ENCODE measurements at regions of chr13 and their contacts with region 1.

Region 1: DNA sequence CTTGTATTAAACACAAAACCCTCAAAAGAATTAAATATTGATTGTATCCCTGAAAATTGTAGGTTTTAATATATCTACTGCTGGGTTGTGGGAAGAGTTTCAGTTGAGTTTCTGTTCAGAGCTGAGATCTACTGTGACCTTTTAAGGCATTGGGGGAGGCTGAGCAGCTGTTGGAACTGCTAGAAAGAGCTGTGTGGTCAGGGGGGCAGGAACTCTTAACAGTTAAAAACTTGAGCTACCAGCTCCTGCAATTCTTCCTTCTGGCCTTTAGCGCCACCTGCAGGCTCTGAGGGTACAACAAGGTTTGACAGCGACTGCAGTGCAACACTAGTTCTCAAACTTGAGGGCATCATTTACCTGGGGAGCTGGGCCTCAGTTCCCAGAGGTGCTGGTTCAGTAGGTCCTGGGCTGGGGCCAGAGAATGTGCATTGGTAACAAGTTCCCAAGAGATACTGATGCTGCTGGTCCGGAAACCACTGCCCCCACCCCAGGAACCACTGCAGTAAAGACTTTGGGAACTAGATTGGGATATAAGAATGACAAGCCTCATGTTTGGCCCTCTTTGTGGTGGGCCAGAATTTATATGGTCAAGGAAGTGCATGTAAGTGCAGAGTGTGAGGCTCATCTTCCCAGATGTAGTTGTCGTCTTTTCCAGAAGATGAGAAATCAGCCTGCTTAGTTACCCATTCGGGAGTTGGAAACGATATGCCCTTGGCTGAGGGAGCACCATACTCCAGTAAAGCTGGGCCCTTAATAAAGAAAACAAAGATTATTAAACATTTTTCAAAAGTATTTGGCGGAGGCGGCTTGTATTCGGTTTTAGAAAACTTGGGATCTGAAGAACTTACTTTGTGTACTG is 2.6 kb downstream of the RNASEH2B start:
- DNase-seq: peak; percentile 86
- ATAC-seq: peak; percentile 9; the same call in 1 of the 2 replicates
- H3K4me3 ChIP-seq: peak overlapping the region; percentile 84; the same call in 1 of the 2 replicates
- H3K27ac ChIP-seq: no peak overlapping the region
- H3K4me1 ChIP-seq: peaks cover 24% of the 10 kb centered on the region
- H3K27me3 ChIP-seq: no peaks in the 10 kb centered on the region
- CTCF ChIP-seq: peak; percentile 82

Region 2: DNA sequence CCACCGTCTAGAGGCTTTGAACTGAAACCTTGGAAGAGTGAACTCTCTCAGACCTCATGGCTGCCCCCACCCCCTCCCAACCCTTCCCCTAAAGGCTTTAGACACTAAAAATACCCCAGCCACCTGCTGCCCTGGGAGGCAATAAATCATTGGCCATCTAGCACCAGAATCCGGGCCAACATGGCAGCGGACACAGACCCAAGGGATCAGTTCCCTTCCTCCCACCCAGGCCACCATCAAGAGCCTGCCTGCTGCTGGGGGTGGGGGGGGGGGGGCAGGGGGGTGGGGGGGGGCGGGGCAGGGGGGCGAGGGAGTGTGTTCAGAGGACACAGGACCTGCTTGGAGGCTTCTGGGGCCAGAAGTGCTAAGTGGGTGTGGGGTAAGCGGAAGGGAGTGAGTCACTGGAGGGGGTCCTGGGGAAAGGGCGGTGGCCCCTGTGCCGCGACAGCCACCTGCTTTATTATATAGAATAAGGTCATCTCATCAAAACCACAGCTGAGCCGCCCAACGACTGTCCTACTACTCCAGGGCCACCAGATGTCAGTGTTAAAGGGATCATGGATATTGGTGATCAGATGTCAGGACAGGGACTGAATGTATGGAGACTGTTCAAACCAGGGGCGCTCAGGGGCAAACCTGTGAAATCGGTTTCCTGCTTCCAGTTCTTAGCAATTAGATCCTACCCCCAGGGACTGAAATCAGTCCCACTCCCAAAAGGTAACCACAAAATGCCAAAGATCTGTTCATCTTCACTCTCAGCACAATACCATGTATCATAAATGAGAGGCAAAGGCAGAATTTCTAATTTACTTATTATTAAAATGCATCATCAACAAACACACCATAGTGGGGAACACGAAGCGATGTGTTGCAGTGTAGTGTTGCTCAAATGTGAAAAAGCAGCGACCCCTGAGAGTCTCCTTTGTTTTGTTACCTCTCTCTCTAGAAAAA is 1259.5 kb before region 1 on chr13:
- CTCF ChIA-PET with region 1: no interaction called
- POLR2A ChIA-PET with region 1: no interaction called
- intact Hi-C with region 1: loop called (anchors 5 kb)
- DNase-seq: peak; percentile 63
- ATAC-seq: peak; percentile 55
- H3K4me3 ChIP-seq: no peak overlapping the region
- H3K27ac ChIP-seq: no peak overlapping the region
- H3K4me1 ChIP-seq: peaks cover 25% of the 10 kb centered on the region
- H3K27me3 ChIP-seq: no peaks in the 10 kb centered on the region
- CTCF ChIP-seq: peak; percentile 65

Region 3: GRCh38 chr13:49976314-49977258 is 935.6 kb before region 1 on chr13:
- CTCF ChIA-PET with region 1: interaction called, 3 read pairs
- POLR2A ChIA-PET with region 1: no interaction called
- intact Hi-C with region 1: loop called (anchors 5 kb)
- DNase-seq: peak; percentile 72
- ATAC-seq: peak; percentile 91
- H3K4me3 ChIP-seq: peak overlapping the region; percentile 41; the same call in 1 of the 2 replicates
- H3K27ac ChIP-seq: peak overlapping the region; percentile 79
- H3K4me1 ChIP-seq: peaks cover 13% of the 10 kb centered on the region
- H3K27me3 ChIP-seq: no peaks in the 10 kb centered on the region
- CTCF ChIP-seq: peak; percentile 93

Region 4: DNA sequence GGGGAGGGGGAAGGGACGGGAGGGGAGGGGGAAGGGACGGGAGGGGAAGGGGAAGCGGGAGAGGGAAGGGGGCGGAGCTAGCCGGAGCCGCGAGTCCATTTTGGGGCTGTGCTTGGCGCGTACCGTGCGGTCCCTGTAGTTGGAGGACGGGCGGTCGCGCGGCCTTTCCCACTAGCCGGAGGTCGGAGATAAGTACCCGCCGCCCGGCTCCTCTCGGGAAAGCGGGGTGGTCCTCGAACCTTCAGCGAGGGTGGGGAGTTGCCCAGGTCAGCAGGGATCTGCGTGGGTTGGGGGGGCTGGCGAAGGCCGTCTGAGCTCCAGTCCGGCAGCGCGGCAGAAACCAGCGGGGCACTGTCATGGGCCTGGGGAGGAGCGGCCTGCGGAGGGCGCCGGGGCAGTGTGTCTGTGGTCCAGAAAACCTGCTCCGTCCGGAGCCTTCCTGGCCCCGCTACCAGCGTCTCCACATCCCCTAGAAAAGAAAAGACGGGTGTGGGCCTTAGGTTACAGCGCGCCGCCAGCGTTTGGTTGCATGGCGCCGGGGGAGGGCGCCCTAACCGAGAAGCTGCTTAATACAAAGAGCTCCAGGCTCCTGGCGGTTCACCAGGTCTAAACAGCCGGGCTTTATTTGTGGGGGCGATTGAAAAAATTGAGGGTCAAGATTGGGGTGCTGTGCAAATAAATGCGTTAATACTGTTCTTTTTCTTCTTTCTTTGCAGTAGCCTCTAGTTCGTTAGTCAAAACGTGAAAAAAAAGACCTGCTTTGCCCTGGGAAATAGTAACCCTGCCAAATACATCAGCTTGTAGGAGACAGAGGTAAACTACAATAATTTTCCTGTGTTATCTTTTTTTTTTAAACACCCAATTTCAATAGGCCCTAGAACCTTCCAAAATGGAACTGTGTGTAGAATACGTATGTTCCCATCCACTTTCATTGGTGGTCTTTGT is 914.9 kb before region 1 on chr13 and contains the start of gene TRIM13:
- CTCF ChIA-PET with region 1: interaction called, 5 read pairs
- POLR2A ChIA-PET with region 1: no interaction called
- intact Hi-C with region 1: loop called (anchors 5 kb)
- DNase-seq: peak; percentile 79
- ATAC-seq: peak; percentile 80
- H3K4me3 ChIP-seq: peak within 1 kb of the TSS; percentile 95
- H3K27ac ChIP-seq: peak within 1 kb of the TSS; percentile 89
- H3K4me1 ChIP-seq: peaks cover 23% of the 10 kb centered on the region
- H3K27me3 ChIP-seq: no peaks in the 10 kb centered on the region
- CTCF ChIP-seq: peak; percentile 77
- total RNA-seq, gene TRIM13: 6.7 and 13.7 TPM in 2 replicates

Region 5: GRCh38 chr13:50654331-50654730 is 257.8 kb before region 1 on chr13:
- CTCF ChIA-PET with region 1: no interaction called
- POLR2A ChIA-PET with region 1: no interaction called
- intact Hi-C with region 1: no loop called
- DNase-seq: no peak
- ATAC-seq: no peak
- H3K4me3 ChIP-seq: no peak overlapping the region
- H3K27ac ChIP-seq: no peak overlapping the region
- H3K4me1 ChIP-seq: no peaks in the 10 kb centered on the region
- H3K27me3 ChIP-seq: no peaks in the 10 kb centered on the region
- CTCF ChIP-seq: no peak

Region 6: GRCh38 chr13:50801087-50801931 is 110.9 kb before region 1 on chr13:
- CTCF ChIA-PET with region 1: interaction called, 3 read pairs
- POLR2A ChIA-PET with region 1: no interaction called
- intact Hi-C with region 1: loop called (anchors 5 kb)
- DNase-seq: peak; percentile 71
- ATAC-seq: peak; percentile 86
- H3K4me3 ChIP-seq: no peak overlapping the region
- H3K27ac ChIP-seq: no peak overlapping the region
- H3K4me1 ChIP-seq: peaks cover 9% of the 10 kb centered on the region; the same call in 1 of the 2 replicates
- H3K27me3 ChIP-seq: no peaks in the 10 kb centered on the region
- CTCF ChIP-seq: peak; percentile 73

Region 7: GRCh38 chr13:51070005-51070649 is 158.0 kb after region 1 on chr13:
- CTCF ChIA-PET with region 1: no interaction called
- POLR2A ChIA-PET with region 1: no interaction called
- intact Hi-C with region 1: loop called (anchors 2 kb)
- DNase-seq: peak; percentile 85
- ATAC-seq: peak; percentile 95
- H3K4me3 ChIP-seq: no peak overlapping the region
- H3K27ac ChIP-seq: no peak overlapping the region
- H3K4me1 ChIP-seq: no peaks in the 10 kb centered on the region
- H3K27me3 ChIP-seq: no peaks in the 10 kb centered on the region
- CTCF ChIP-seq: peak; percentile 87

Measured in PC-3 (cell line).